Activated CD4-positive, alpha-beta T cell treated with anti-CD3 and anti-CD28 coated beads, Interleukin-2, amount 10 ng/mL, durations not matched to agents 7 days and 5 days (primary cell): ENCODE measurements at regions of chr22 and their contacts with region 1.

Region 1: GRCh38 chr22:31616315-31617001 is 45.6 kb downstream of the PISD start:
- DNase-seq: no peak
- H3K4me3 Mint-ChIP-seq: no peak overlapping the region
- H3K27ac Mint-ChIP-seq: peak overlapping the region; percentile 54
- H3K4me1 Mint-ChIP-seq: peaks cover 14% of the 10 kb centered on the region
- H3K27me3 Mint-ChIP-seq: no peaks in the 10 kb centered on the region

Region 2: DNA sequence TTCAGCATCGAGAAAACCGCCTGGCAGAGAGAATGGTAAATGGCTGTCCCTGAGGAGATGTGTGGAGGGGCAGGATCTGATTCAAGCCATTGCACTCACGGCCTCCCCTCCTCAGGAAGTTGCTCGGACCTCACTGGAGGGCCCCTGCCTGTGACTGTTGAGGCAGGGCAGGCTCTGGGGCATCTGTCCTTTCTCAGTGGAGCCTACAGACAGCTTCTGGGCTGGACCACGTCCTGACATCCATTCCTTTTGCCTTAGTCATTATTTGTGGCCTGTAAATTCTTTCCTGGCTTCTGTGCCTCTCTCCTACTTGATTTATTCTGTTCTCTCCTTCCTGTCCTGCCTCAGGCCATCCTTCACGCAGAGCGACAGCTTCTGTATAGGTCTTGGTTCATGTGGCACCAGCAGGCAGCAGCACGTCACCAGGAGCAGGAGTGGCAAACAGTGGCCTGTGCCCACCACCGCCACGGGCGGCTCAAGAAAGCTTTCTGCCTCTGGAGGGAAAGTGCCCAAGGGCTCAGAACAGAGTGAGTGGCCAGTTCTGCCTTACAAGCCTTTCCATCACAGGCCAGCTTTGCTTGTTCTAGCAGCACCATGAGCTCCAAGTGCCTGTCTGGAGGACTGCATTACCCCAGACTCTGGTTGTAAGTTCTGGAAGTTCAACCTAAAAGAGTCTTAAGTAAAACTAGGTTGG is 14.1 kb before region 1 on chr22:
- CTCF ChIA-PET with region 1: interaction called, 4 read pairs
- POLR2A ChIA-PET with region 1: interaction called, 15 read pairs
- DNase-seq: no peak
- H3K4me3 Mint-ChIP-seq: no peak overlapping the region
- H3K27ac Mint-ChIP-seq: no peak overlapping the region
- H3K4me1 Mint-ChIP-seq: no peaks in the 10 kb centered on the region
- H3K27me3 Mint-ChIP-seq: no peaks in the 10 kb centered on the region

Region 3: DNA sequence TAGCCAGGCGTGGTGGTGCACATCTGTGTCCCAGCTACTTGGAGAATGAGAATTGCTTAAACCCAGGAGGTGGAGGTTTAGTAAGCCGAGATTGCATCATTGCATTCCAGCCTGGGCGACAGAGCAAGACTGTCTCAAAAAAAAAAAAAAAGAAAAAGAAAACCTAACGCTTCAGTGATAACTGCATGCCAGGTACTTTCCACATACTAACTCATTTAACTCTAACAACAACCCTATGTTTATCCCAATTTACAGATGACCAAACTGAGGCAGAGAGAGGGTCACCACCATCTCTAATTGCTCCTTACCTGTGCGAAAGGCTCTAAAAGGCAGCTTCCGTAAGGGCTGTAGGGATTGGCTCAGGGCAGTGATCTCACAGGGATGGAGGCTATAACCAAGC is 33.9 kb after region 1 on chr22:
- CTCF ChIA-PET with region 1: no interaction called
- POLR2A ChIA-PET with region 1: no interaction called
- DNase-seq: no peak
- H3K4me3 Mint-ChIP-seq: no peak overlapping the region
- H3K27ac Mint-ChIP-seq: no peak overlapping the region
- H3K4me1 Mint-ChIP-seq: peaks cover 20% of the 10 kb centered on the region
- H3K27me3 Mint-ChIP-seq: no peaks in the 10 kb centered on the region